Activated naive CD4-positive, alpha-beta T cell treated with anti-CD3 and anti-CD28 coated beads for 36 hours (primary cell): ENCODE measurements at regions of chr15 and their contacts with region 1.

Region 1: GRCh38 chr15:80275934-80276333 is 23.9 kb upstream of the CTXND1 start:
- DNase-seq: no peak
- H3K4me3 Mint-ChIP-seq: no peak overlapping the region
- H3K27ac Mint-ChIP-seq: no peak overlapping the region
- H3K4me1 Mint-ChIP-seq: no peaks in the 10 kb centered on the region
- H3K27me3 Mint-ChIP-seq: peaks cover 9% of the 10 kb centered on the region

Region 2: DNA sequence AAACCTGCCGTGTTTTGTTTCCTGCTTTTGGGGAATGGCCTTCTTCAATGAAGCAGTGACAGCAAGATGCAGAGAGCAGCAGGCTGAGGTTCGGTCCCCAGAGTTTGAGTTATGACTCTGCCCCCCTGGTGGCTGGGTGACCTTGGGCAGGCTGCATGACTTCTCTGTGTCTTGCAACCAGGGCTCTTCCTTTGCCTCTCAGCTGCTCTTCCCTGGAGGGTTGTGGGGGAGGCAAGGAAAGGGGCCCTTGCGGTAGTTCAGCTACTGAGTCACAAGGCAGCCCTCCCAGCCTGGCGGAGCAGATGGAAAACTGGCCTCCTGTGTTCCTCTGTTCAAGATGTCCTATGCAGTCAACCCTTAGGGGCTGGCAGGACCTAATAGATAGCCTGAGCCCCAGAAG is 41.1 kb before region 1 on chr15:
- CTCF ChIA-PET with region 1: no interaction called
- intact Hi-C with region 1: loop called (anchors 2 kb)
- DNase-seq: peak; percentile 66
- H3K4me3 Mint-ChIP-seq: no peak overlapping the region
- H3K27ac Mint-ChIP-seq: no peak overlapping the region
- H3K4me1 Mint-ChIP-seq: no peaks in the 10 kb centered on the region
- H3K27me3 Mint-ChIP-seq: peaks cover 17% of the 10 kb centered on the region

Region 3: DNA sequence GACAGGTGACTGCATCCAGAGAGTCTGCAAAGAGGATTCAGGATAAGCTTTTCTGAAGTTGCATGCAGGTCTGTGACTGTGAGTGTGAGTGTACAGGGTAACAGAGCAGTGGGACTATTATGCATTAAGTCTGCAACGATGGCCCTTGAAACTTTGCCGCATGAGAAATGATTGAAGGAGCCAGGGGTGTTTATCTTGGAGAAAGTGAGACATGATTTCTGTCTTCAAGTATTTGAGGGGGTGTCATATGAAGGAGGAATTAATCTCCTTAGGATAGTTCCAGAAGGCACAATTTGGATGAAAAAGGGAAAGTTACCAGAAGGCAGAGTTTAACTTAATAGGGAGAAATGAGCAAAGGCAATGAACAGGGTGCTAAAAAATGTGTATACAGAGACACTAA is 247.8 kb after region 1 on chr15:
- CTCF ChIA-PET with region 1: no interaction called
- intact Hi-C with region 1: no loop called
- DNase-seq: no peak
- H3K4me3 Mint-ChIP-seq: no peak overlapping the region
- H3K27ac Mint-ChIP-seq: no peak overlapping the region
- H3K4me1 Mint-ChIP-seq: no peaks in the 10 kb centered on the region
- H3K27me3 Mint-ChIP-seq: peaks cover 5% of the 10 kb centered on the region